Caco-2 (cell line): ENCODE measurements at regions of chr2 and their contacts with region 1.

Region 1: DNA sequence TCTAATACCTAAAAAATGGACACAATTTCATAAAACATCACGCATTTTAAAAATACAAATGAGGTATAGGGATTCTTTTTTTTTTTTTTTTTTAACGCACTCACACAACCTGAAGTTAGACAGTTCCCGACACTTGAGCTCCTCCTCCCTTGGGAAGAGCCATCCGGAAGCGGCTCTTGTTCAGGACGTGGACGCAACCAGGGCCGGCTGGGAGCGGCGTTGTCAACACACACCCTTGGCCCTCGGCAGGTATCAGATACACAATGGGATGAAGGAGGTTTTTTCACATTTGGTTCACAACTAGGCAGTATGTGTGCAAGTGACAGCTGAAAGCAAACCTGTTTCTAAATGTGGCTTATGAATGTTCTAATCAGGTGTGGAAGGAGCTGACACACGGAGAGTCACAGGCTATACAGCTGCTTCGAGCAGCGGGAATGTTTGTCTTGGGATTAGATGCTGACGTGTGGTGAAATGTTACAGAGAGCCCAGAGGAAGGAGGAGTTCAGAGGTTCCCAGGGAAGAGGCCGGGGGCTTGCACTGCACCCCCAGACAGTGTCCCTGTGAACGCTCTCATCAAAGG is 111.1 kb downstream of the PXDN start:
- DNase-seq: peak; percentile 53 to 61
- H3K4me3 ChIP-seq: peak overlapping the region; percentile 30
- H3K4me3 Mint-ChIP-seq: peak overlapping the region; percentile 71
- H3K27ac Mint-ChIP-seq: peak overlapping the region; percentile 78
- H3K4me1 ChIP-seq: peaks cover 37% of the 10 kb centered on the region
- H3K4me1 Mint-ChIP-seq: peaks cover 18% of the 10 kb centered on the region
- H3K27me3 ChIP-seq: no peaks in the 10 kb centered on the region
- H3K27me3 Mint-ChIP-seq: no peaks in the 10 kb centered on the region
- CTCF ChIP-seq: no peak

Region 2: GRCh38 chr2:1553671-1554295 is 79.4 kb before region 1 on chr2:
- CTCF ChIA-PET with region 1: no interaction called
- POLR2A ChIA-PET with region 1: interaction called, 4 read pairs
- intact Hi-C with region 1: loop called (anchors 1 kb)
- DNase-seq: peak; percentile 65 to 67
- H3K4me3 ChIP-seq: no peak overlapping the region
- H3K4me3 Mint-ChIP-seq: peak overlapping the region; percentile 41
- H3K27ac Mint-ChIP-seq: peak overlapping the region; percentile 85
- H3K4me1 ChIP-seq: peaks cover 42% of the 10 kb centered on the region
- H3K4me1 Mint-ChIP-seq: peaks cover 12% of the 10 kb centered on the region
- H3K27me3 ChIP-seq: no peaks in the 10 kb centered on the region
- H3K27me3 Mint-ChIP-seq: no peaks in the 10 kb centered on the region
- CTCF ChIP-seq: peak in 1 of 2 experiments; percentile 28

Region 3: DNA sequence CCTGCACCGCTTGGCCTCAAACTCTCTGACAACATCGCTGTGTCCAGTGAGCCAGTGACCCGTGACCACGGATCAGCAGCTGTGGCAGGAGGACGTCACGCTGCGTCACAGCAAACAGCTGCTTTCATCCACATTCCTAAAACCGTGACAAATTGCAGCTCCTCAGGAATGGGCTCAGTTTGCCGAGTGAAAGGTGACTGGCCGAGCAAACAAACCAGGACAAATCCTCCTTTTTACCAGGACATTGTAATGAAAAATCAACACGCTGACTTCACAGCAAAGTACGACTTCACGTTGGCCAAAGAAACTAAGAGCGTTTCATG is 53.6 kb after region 1 on chr2:
- CTCF ChIA-PET with region 1: no interaction called
- POLR2A ChIA-PET with region 1: no interaction called
- intact Hi-C with region 1: loop called (anchors 1 kb)
- DNase-seq: peak; percentile 59 to 62
- H3K4me3 ChIP-seq: no peak overlapping the region
- H3K4me3 Mint-ChIP-seq: peak overlapping the region; percentile 60
- H3K27ac Mint-ChIP-seq: peak overlapping the region; percentile 65
- H3K4me1 ChIP-seq: peaks cover 13% of the 10 kb centered on the region
- H3K4me1 Mint-ChIP-seq: peaks cover 16% of the 10 kb centered on the region
- H3K27me3 ChIP-seq: no peaks in the 10 kb centered on the region
- H3K27me3 Mint-ChIP-seq: no peaks in the 10 kb centered on the region
- CTCF ChIP-seq: no peak